ENCODE measurements at regions of chr3 and their contacts with region 1.

Region 1: GRCh38 chr3:194003125-194004057 is 132.6 kb upstream of the HES1 start:
- DNase-seq: peak; percentile 71
- ATAC-seq: peak; percentile 87
- H3K4me3 ChIP-seq: peak overlapping the region; percentile 42 to 60
- H3K27ac ChIP-seq: peak overlapping the region; percentile 50
- H3K4me1 ChIP-seq: peaks cover 20 to 39% of the 10 kb centered on the region in 2 experiments
- H3K27me3 ChIP-seq: no peaks in the 10 kb centered on the region; the same call in 1 of the 2 replicates
- CTCF ChIP-seq: no peak
- POLR2A ChIP-seq: peak; percentile 80
- RAD21 ChIP-seq: peak; percentile 29; the same call in 1 of the 2 replicates

Region 2: DNA sequence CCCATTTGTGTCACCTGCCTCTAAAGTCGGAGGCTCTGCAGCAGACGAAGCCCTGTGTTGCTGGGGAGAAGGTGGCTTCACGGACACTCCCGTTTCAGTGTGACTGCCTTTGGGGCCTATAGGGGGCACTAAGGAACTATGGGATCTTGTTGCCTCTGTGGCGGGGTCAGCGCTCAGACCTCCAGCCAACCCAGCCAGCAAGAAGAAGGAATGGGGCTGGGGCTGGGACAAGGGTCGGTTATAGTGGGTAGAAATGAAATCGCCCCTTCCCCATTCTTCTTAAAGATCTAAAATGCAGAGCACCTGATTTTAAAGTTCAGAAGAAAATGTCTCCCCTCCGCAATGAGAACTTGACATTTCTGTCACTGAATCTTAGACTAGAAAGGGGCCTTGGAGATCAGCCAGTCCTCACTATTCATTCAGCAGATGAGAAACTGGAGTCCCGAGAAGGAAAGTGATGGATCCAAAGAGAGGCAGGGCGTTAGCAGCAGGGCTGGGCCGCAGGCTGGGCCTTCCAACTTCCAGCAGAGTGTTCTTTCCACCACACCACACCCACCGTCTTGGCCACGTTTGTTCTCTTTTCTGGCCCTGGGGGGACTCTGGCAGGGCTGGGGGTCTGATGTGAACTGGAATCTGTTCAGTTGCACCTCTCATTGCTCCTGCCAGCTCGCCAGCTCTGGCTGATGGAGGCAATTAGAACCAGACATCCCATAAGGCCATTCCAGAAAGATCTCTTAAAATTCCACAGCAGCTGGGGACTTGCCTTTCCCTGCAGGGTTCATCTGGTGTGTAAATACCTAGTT is 215.0 kb before region 1 on chr3:
- CTCF ChIA-PET with region 1: no interaction called
- POLR2A ChIA-PET with region 1: no interaction called
- RAD21 ChIA-PET with region 1: interaction called in 1 of 2 experiments, 5 read pairs
- intact Hi-C with region 1: loop called (anchors 2 kb)
- DNase-seq: peak; percentile 51
- ATAC-seq: peak; percentile 93
- H3K4me3 ChIP-seq: no peak overlapping the region
- H3K27ac ChIP-seq: no peak overlapping the region
- H3K4me1 ChIP-seq: peaks cover 7 to 38% of the 10 kb centered on the region in 2 experiments
- H3K27me3 ChIP-seq: peaks cover 18% of the 10 kb centered on the region; the same call in 1 of the 2 replicates
- CTCF ChIP-seq: peak; percentile 67 to 93 (median 90); a peak in 5 of 6 replicates
- POLR2A ChIP-seq: no peak
- RAD21 ChIP-seq: peak; percentile 99